H1 (cell line): ENCODE measurements at regions of chr1 and their contacts with region 1.

Region 1: DNA sequence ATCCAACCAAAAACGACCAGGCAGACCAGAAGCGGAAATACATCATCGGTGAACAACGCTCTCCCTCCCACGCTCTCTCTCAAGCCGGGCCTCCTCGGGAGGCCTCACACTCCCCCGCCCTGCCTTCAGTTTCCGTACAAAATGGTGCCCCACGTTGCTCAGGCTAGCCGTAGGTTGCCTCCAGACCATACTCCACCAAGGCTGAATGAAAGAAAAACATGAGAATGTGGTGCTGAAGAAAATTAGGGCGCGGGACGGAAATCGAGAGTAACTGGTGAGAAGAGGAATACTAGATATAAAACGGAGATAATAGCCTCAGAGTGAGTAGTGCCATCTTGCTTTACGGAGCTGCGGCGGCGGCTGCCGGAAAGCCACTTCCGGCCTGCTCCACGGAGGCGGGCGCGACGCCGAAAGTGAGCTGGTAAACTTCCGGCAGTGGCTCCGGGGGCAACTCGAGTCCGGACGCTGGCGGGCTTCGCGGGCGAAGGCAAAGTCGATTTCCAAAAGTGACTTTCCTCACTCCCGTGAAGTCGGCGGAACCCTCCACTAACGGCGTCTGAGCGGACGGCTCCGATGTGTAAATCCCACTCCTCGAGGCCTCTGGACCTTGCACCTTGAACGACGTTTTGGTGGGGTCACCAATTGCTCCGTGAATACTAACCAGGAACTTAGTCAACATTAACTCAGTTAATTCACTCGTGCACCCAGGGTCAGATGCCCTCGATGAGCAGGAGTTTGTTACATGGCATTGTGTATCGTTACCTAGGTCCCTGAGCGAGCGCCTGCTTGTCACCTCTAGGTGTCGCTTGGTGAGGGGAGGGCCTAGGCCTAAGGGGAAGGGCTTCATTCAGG is at the start of gene SH3BP5L:
- DNase-seq: peak; percentile 74 to 87
- H3K4me3 ChIP-seq: peak within 1 kb of the TSS; percentile 88 to 98 (median 94)
- H3K27ac ChIP-seq: peak within 1 kb of the TSS; percentile 98
- H3K4me1 ChIP-seq: peaks cover 0 to 5% (median 1%) of the 10 kb centered on the region in 4 experiments; a peak in 5 of 7 replicates
- H3K27me3 ChIP-seq: no peaks in the 10 kb centered on the region
- CTCF ChIP-seq: peak; percentile 42 to 71 (median 60)
- EP300 ChIP-seq: no peak
- POLR2A ChIP-seq: peak in 1 of 2 experiments; percentile 91; a peak in 2 of 3 replicates
- RAD21 ChIP-seq: peak; percentile 27 to 51; a peak in 3 of 4 replicates
- total RNA-seq, gene SH3BP5L: 27.9 and 28.4 TPM in 2 replicates

Region 2: GRCh38 chr1:248618878-248619277 is 207.3 kb before region 1 on chr1:
- CTCF ChIA-PET with region 1: no interaction called
- POLR2A ChIA-PET with region 1: no interaction called
- DNase-seq: no peak
- H3K4me3 ChIP-seq: no peak overlapping the region
- H3K27ac ChIP-seq: no peak overlapping the region
- H3K4me1 ChIP-seq: no peaks in the 10 kb centered on the region
- H3K27me3 ChIP-seq: no peaks in the 10 kb centered on the region
- CTCF ChIP-seq: no peak
- EP300 ChIP-seq: no peak
- POLR2A ChIP-seq: no peak
- RAD21 ChIP-seq: peak in 1 of 2 experiments; percentile 23; a peak in 1 of 4 replicates

Region 3: GRCh38 chr1:248807067-248807737 is 18.9 kb before region 1 on chr1:
- CTCF ChIA-PET with region 1: interaction called, 14 read pairs
- POLR2A ChIA-PET with region 1: interaction called, 8 read pairs
- DNase-seq: peak in 1 of 2 experiments; percentile 76
- H3K4me3 ChIP-seq: no peak overlapping the region
- H3K27ac ChIP-seq: no peak overlapping the region
- H3K4me1 ChIP-seq: no peaks in the 10 kb centered on the region
- H3K27me3 ChIP-seq: no peaks in the 10 kb centered on the region
- CTCF ChIP-seq: peak; percentile 82 to 86 (median 83)
- EP300 ChIP-seq: no peak
- POLR2A ChIP-seq: no peak
- RAD21 ChIP-seq: peak; percentile 85 to 91

Region 4: DNA sequence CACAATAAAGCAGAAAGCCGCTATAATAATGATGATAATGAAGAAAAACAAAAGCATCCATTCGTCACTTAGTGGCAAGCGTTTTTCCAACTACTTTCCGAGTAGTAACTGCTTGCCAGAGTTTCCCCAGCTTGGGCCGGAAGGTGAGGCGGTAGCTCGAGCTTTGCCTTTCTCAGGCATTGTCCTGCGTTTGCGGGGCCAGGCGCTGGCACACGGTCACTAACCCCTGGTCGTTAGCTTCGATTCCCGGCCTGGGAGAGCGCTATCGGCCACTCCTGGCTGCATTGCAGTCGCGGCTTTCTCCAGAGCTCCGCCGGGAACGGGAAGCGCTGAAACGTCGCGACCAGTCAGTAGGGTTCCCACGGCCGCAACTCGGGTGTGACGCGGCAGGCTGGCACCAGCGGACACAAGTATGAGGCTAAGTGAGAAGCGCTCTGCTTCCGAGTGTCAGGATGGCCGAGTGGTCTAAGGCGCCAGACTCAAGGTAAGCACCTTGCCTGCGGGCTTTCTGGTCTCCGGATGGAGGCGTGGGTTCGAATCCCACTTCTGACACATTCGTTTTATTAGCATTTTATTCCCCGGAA is 47.4 kb after region 1 on chr1:
- CTCF ChIA-PET with region 1: interaction called, 5 read pairs
- POLR2A ChIA-PET with region 1: interaction called, 15 read pairs
- DNase-seq: peak; percentile 93 to 100
- H3K4me3 ChIP-seq: peak overlapping the region; percentile 85 to 94 (median 90)
- H3K27ac ChIP-seq: peak overlapping the region; percentile 62; the same call in 1 of the 2 replicates
- H3K4me1 ChIP-seq: peaks cover 0 to 2% (median 0%) of the 10 kb centered on the region in 4 experiments; a peak in 1 of 7 replicates
- H3K27me3 ChIP-seq: no peaks in the 10 kb centered on the region
- CTCF ChIP-seq: no peak
- EP300 ChIP-seq: no peak
- POLR2A ChIP-seq: no peak
- RAD21 ChIP-seq: peak in 1 of 2 experiments; percentile 1; a peak in 1 of 4 replicates